CD8-positive, alpha-beta T cell (primary cell): ENCODE measurements at regions of chr1 and their contacts with region 1.

Region 1: DNA sequence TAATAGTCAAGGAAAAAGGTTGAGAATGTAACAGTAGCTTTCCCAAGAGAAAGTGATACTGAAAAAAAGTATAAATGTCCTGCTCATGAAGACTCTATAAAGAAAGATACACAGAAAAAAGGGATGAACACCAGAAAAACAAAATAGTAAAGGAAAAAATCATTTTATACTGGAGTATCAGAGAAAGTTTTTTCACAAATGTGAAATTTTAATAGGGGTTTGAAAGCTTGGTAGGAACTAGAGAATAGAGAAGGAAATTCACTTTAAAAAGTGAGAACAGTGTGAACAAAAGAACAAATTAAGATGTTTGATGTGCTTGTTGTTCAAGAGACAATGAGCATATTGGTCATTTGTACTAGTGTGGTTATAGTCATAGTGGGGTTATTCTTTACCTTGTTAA is 25.6 kb downstream of the UCHL5 start:
- DNase-seq: no peak
- ATAC-seq: no peak
- H3K4me3 ChIP-seq: no peak overlapping the region
- H3K4me3 Mint-ChIP-seq: no peak overlapping the region
- H3K27ac ChIP-seq: no peak overlapping the region
- H3K27ac Mint-ChIP-seq: no peak overlapping the region
- H3K4me1 ChIP-seq: no peaks in the 10 kb centered on the region
- H3K4me1 Mint-ChIP-seq: peaks cover 43% of the 10 kb centered on the region
- H3K27me3 ChIP-seq: no peaks in the 10 kb centered on the region
- H3K27me3 Mint-ChIP-seq: no peaks in the 10 kb centered on the region
- CTCF ChIP-seq: no peak

Region 2: GRCh38 chr1:193054169-193054675 is 20.6 kb after region 1 on chr1:
- CTCF ChIA-PET with region 1: no interaction called
- POLR2A ChIA-PET with region 1: interaction called, 3 read pairs
- intact Hi-C with region 1: loop called in 1 of 2 experiments (anchors 2 kb)
- DNase-seq: no peak
- ATAC-seq: no peak
- H3K4me3 ChIP-seq: no peak overlapping the region
- H3K4me3 Mint-ChIP-seq: no peak overlapping the region
- H3K27ac ChIP-seq: no peak overlapping the region
- H3K27ac Mint-ChIP-seq: no peak overlapping the region
- H3K4me1 ChIP-seq: peaks cover 17% of the 10 kb centered on the region
- H3K4me1 Mint-ChIP-seq: peaks cover 48% of the 10 kb centered on the region
- H3K27me3 ChIP-seq: no peaks in the 10 kb centered on the region
- H3K27me3 Mint-ChIP-seq: no peaks in the 10 kb centered on the region
- CTCF ChIP-seq: no peak

Region 3: GRCh38 chr1:193069748-193070385 is 36.3 kb after region 1 on chr1:
- CTCF ChIA-PET with region 1: no interaction called
- POLR2A ChIA-PET with region 1: no interaction called
- intact Hi-C with region 1: no loop called
- DNase-seq: peak in 2 of 9 experiments; percentile 32 to 51
- ATAC-seq: peak; percentile 52
- H3K4me3 ChIP-seq: no peak overlapping the region
- H3K4me3 Mint-ChIP-seq: no peak overlapping the region
- H3K27ac ChIP-seq: peak overlapping the region in 1 of 2 experiments; percentile 74
- H3K27ac Mint-ChIP-seq: peak overlapping the region; percentile 73
- H3K4me1 ChIP-seq: peaks cover 15% of the 10 kb centered on the region
- H3K4me1 Mint-ChIP-seq: peaks cover 59% of the 10 kb centered on the region
- H3K27me3 ChIP-seq: no peaks in the 10 kb centered on the region
- H3K27me3 Mint-ChIP-seq: no peaks in the 10 kb centered on the region
- CTCF ChIP-seq: no peak